A673 (cell line): ENCODE measurements at regions of chr17 and their contacts with region 1.

Region 1: GRCh38 chr17:28902819-28903545 is at the start of gene DHRS13:
- DNase-seq: peak; percentile 96
- H3K4me3 ChIP-seq: peak within 1 kb of the TSS; percentile 90
- H3K27ac ChIP-seq: peak within 1 kb of the TSS; percentile 90
- H3K4me1 ChIP-seq: peaks cover 37% of the 10 kb centered on the region
- H3K27me3 ChIP-seq: no peaks in the 10 kb centered on the region
- CTCF ChIP-seq: peak; percentile 93
- total RNA-seq, gene DHRS13: 37.3 and 41.9 TPM in 2 replicates

Region 2: DNA sequence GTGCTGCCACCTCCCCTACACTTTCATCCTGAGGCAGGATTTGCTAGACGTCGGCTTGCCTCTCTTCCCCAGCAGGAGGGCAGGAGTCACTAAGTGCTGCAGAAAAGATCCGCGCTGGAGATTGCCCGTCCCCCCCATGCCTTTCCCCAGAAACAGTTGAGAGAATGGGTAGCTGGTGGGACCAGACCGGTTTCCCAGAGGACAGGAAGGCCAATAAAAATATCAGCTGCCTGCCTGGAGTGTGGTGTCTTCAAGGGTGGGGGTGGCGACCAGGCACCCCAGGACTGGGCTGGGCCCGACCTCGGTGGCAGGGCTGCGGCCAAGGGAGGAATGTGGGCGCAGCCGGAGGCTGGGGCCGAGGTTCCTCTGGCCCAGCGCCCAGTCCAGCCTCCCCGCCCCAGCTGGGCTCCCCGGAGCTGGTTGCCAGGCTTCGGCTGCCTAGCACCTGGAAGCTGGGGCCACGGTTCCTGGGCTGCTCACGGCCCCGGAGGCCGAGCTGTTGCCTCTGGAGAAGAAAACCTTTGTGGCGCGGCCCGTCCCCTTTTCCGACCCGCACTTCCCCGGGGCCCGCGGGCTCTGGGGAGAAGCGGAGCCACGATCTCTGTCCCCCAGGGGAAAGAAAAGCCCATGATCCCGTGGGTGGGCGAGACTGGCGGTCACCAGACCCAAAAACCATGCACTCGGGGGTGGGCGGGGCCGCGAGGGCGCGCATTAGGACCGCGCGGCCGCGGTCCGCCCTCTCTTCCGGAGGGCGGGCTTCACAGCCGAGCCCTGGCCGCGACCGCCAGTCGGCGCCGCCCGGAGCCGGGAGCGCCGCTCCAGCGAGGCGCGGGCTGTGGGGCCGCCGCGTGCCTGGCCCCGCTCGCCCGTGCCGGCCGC is 159.5 kb before region 1 on chr17 and contains the start of gene TRAF4:
- CTCF ChIA-PET with region 1: no interaction called
- POLR2A ChIA-PET with region 1: no interaction called
- intact Hi-C with region 1: loop called (anchors 5 kb)
- DNase-seq: peak; percentile 93
- H3K4me3 ChIP-seq: peak within 1 kb of the TSS; percentile 72
- H3K27ac ChIP-seq: peak within 1 kb of the TSS; percentile 94
- H3K4me1 ChIP-seq: peaks cover 32% of the 10 kb centered on the region
- H3K27me3 ChIP-seq: no peaks in the 10 kb centered on the region
- CTCF ChIP-seq: no peak
- total RNA-seq, gene TRAF4: 128 TPM in 2 replicates